Psoas muscle (tissue), 8 donors: ENCODE measurements at regions of chrX and their contacts with region 1.

Region 1: GRCh38 chrX:106726485-106727437 is at the start of gene RNF128:
- DNase-seq: peak; percentile 38 to 72
- ATAC-seq: peak; percentile 85 to 92 (median 89)
- H3K4me3 ChIP-seq: peak within 1 kb of the TSS; percentile 71
- H3K27ac ChIP-seq: peak within 1 kb of the TSS; percentile 81
- H3K4me1 ChIP-seq: peaks cover 5% of the 10 kb centered on the region
- H3K27me3 ChIP-seq: peaks cover 0 to 31% (median 0%) of the 10 kb centered on the region in 3 donors
- CTCF ChIP-seq: no peak
- total RNA-seq, gene RNF128: 4.3 to 7.1 (median 4.8) TPM

Region 2: GRCh38 chrX:106906361-106906760 is 179.6 kb after region 1 on chrX:
- intact Hi-C with region 1: loop called in 1 of 2 experiments (anchors 10 kb)
- DNase-seq: no peak
- ATAC-seq: no peak
- H3K4me3 ChIP-seq: no peak overlapping the region
- H3K27ac ChIP-seq: peak overlapping the region; percentile 77
- H3K4me1 ChIP-seq: peaks cover 30% of the 10 kb centered on the region
- H3K27me3 ChIP-seq: no peaks in the 10 kb centered on the region
- CTCF ChIP-seq: no peak

Region 3: GRCh38 chrX:108439434-108439883 is 1712.7 kb after region 1 on chrX and contains the start of gene COL4A5:
- intact Hi-C with region 1: loop called in 1 of 2 experiments (anchors 10 kb)
- DNase-seq: peak; percentile 31 to 61
- ATAC-seq: peak; percentile 88 to 94 (median 92)
- H3K4me3 ChIP-seq: peak within 1 kb of the TSS; percentile 70
- H3K27ac ChIP-seq: peak within 1 kb of the TSS; percentile 75
- H3K4me1 ChIP-seq: no peaks in the 10 kb centered on the region
- H3K27me3 ChIP-seq: peaks cover 0 to 44% (median 0%) of the 10 kb centered on the region in 3 donors
- CTCF ChIP-seq: no peak
- total RNA-seq, gene COL4A5: 3.1 to 8.6 (median 6.1) TPM